HAP-1 (cell line): ENCODE measurements at regions of chr2 and their contacts with region 1.

Region 1: GRCh38 chr2:71545572-71546274 is 92.4 kb downstream of the DYSF start:
- DNase-seq: peak; percentile 61 to 79
- H3K4me3 ChIP-seq: no peak overlapping the region
- H3K4me1 ChIP-seq: no peaks in the 10 kb centered on the region
- H3K27me3 ChIP-seq: 0 out of 2 replicates have a peak, but pooled peaks cover 2% of the 10 kb centered on the region

Region 2: DNA sequence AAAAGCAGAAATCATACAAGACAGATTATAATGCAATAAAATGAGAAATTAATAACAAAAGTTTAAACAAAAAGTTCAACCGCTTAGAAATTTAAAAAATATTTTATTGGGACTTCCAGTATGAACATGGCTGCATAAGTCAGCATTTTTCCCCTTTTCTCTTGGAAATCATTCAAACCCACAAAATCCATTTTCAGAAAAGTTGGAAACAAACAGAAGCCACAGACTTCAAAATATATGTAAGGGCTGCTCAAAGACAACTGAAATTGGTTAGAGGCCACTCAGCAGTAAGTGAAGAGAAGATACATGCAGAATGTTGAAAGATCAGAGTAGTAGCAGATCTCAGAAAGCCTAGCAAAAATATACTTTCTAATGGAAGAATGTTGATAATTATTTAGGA is 101.6 kb after region 1 on chr2:
- in situ Hi-C with region 1: no loop called
- DNase-seq: no peak
- H3K4me3 ChIP-seq: no peak overlapping the region
- H3K4me1 ChIP-seq: no peaks in the 10 kb centered on the region
- H3K27me3 ChIP-seq: no peaks in the 10 kb centered on the region

Region 3: GRCh38 chr2:72150157-72150865 is 604.6 kb after region 1 on chr2:
- in situ Hi-C with region 1: loop called (anchors 5 kb)
- DNase-seq: peak; percentile 64 to 90
- H3K4me3 ChIP-seq: no peak overlapping the region
- H3K4me1 ChIP-seq: peaks cover 5% of the 10 kb centered on the region
- H3K27me3 ChIP-seq: peaks cover 12% of the 10 kb centered on the region

Region 4: GRCh38 chr2:72579591-72580180 is 1034.0 kb after region 1 on chr2:
- in situ Hi-C with region 1: loop called (anchors 25 kb)
- DNase-seq: peak in 1 of 2 experiments; percentile 77
- H3K4me3 ChIP-seq: no peak overlapping the region
- H3K4me1 ChIP-seq: peaks cover 15% of the 10 kb centered on the region
- H3K27me3 ChIP-seq: no peaks in the 10 kb centered on the region

Region 5: DNA sequence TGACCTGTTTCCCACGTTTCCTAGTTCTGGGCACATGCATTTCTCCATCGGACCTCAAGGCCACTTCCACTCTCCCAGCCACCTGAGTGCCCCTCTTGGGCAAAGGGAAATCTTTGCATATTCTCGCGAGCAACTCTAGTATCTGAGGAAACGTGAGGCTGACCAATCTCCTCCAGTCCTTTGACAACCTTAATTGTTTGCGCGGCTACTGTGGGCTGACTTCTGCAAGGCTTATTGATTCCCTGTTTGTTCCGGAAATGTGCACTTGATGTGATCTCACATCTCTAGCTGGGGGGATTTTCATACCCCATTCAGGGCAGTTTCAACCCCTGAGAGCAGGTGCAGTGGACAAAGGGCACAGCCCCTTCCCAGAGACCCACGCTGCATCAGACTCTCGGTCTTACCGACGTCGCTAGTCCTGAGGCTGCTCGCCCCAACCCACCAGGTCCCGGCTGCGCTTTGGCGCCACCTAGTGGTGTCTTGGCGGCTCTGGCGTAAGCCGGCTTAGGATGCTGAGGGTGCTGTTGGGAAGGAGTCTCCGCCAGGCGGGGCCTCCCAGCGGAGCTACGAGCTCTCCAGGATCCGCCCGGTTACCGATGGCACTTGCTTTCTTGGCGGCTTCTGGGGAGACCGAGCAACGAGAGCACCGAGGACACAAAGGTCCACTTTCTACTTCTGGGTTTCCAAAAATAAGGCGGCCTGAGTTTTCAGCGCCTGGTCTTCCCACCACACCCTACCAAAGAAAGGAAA is 1316.7 kb after region 1 on chr2:
- in situ Hi-C with region 1: loop called (anchors 25 kb)
- DNase-seq: peak; percentile 80 to 93
- H3K4me3 ChIP-seq: peak overlapping the region; percentile 19
- H3K4me1 ChIP-seq: peaks cover 7% of the 10 kb centered on the region
- H3K27me3 ChIP-seq: peaks cover 24% of the 10 kb centered on the region